Activated CD8-positive, alpha-beta T cell treated with anti-CD3 and anti-CD28 coated beads, Interleukin-2, amount 10 ng/mL, durations not matched to agents 7 days and 5 days (primary cell): ENCODE measurements at regions of chr1 and their contacts with region 1.

Region 1: GRCh38 chr1:205485338-205486228 is 18.9 kb upstream of the CDK18 start:
- DNase-seq: peak; percentile 77
- ATAC-seq: peak; percentile 73
- H3K4me3 Mint-ChIP-seq: no peak overlapping the region
- H3K27ac Mint-ChIP-seq: no peak overlapping the region
- H3K4me1 Mint-ChIP-seq: peaks cover 30% of the 10 kb centered on the region
- H3K27me3 Mint-ChIP-seq: peaks cover 37% of the 10 kb centered on the region

Region 2: DNA sequence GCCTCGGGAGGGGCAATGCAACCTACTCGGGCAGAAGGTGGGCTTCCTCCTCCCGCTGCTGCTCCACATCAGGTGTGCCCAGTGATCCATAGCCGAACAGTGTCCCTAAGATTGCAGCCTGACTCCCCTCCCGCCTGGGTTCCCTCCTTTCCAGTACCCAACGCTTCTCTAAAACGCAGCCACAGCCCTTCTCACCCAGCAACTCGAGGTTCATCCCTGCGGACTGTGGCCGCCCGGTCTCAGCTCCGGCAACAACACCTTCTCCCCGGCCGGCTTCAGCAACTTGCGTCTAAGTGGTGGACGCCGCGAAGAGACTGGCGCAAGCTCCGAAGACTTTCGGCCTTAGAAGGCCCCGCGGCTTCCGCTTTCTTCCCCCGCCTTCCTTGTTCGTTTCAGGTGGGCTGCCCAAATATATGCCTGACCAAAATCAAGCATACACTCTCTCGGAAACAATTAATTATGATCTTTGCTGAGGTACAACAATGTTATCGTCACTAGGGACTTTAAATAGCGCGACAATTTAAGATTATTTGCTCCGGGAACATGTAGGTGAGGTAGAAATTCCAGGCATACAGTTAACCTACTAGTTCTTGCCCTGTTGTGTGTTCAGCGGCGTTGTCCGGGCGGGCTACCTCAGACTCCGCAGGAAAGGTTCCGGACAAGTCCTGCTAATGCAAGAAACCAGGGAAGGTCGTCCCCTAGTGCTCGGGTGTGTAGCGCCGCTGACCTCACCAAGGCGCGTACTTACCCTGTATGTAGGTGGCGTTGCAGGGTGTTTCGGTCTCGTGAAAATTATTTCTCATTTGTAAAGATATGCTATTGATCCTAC is 363.7 kb before region 1 on chr1 and contains the start of gene RBBP5:
- CTCF ChIA-PET with region 1: no interaction called
- POLR2A ChIA-PET with region 1: no interaction called
- DNase-seq: peak; percentile 96
- ATAC-seq: peak; percentile 98
- H3K4me3 Mint-ChIP-seq: peak within 1 kb of the TSS; percentile 96
- H3K27ac Mint-ChIP-seq: peak within 1 kb of the TSS; percentile 99
- H3K4me1 Mint-ChIP-seq: peaks cover 39% of the 10 kb centered on the region
- H3K27me3 Mint-ChIP-seq: no peaks in the 10 kb centered on the region
- total RNA-seq, gene RBBP5: 20.3 to 22.0 TPM

Region 3: GRCh38 chr1:205321164-205321958 is 164.2 kb before region 1 on chr1 and contains the start of gene NUAK2:
- CTCF ChIA-PET with region 1: interaction called, 17 read pairs
- POLR2A ChIA-PET with region 1: no interaction called
- DNase-seq: peak; percentile 69
- ATAC-seq: peak; percentile 79
- H3K4me3 Mint-ChIP-seq: peak within 1 kb of the TSS; percentile 87
- H3K27ac Mint-ChIP-seq: peak within 1 kb of the TSS; percentile 56
- H3K4me1 Mint-ChIP-seq: peaks cover 52% of the 10 kb centered on the region
- H3K27me3 Mint-ChIP-seq: peaks cover 36% of the 10 kb centered on the region
- total RNA-seq, gene NUAK2: 1.6 TPM

Region 4: GRCh38 chr1:205354259-205354904 is 131.2 kb before region 1 on chr1:
- CTCF ChIA-PET with region 1: interaction called, 123 read pairs
- POLR2A ChIA-PET with region 1: no interaction called
- DNase-seq: peak; percentile 79
- ATAC-seq: peak; percentile 51
- H3K4me3 Mint-ChIP-seq: no peak overlapping the region
- H3K27ac Mint-ChIP-seq: no peak overlapping the region
- H3K4me1 Mint-ChIP-seq: no peaks in the 10 kb centered on the region
- H3K27me3 Mint-ChIP-seq: peaks cover 21% of the 10 kb centered on the region

Region 5: DNA sequence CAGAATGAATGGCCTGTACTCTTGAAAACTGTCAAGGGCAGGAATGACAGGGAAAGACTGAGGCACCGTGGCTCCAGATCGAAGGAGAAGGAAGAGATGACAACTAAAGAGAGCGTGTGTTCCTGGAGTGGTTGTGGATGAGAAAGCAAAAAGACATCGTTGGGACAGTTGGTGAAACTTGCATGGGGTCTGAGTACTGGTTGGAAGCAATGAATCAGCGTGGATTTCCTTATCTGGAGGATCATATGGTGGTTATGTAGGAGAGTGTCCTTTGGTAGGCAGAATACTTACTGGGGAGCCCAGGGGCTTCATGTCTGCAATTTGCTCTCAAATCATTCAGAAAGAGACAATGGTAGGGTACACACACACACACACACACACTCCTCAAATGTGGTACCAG is 77.6 kb before region 1 on chr1:
- CTCF ChIA-PET with region 1: interaction called, 14 read pairs
- POLR2A ChIA-PET with region 1: no interaction called
- DNase-seq: no peak
- ATAC-seq: no peak
- H3K4me3 Mint-ChIP-seq: no peak overlapping the region
- H3K27ac Mint-ChIP-seq: no peak overlapping the region
- H3K4me1 Mint-ChIP-seq: peaks cover 4% of the 10 kb centered on the region
- H3K27me3 Mint-ChIP-seq: peaks cover 20% of the 10 kb centered on the region

Region 6: GRCh38 chr1:205430696-205431305 is 54.8 kb before region 1 on chr1:
- CTCF ChIA-PET with region 1: interaction called, 53 read pairs
- POLR2A ChIA-PET with region 1: no interaction called
- DNase-seq: peak; percentile 64
- ATAC-seq: peak; percentile 75
- H3K4me3 Mint-ChIP-seq: peak overlapping the region; percentile 74
- H3K27ac Mint-ChIP-seq: peak overlapping the region; percentile 32
- H3K4me1 Mint-ChIP-seq: peaks cover 11% of the 10 kb centered on the region
- H3K27me3 Mint-ChIP-seq: peaks cover 25% of the 10 kb centered on the region

Region 7: GRCh38 chr1:205500240-205501233 is 15.0 kb after region 1 on chr1:
- CTCF ChIA-PET with region 1: interaction called, 26 read pairs
- POLR2A ChIA-PET with region 1: no interaction called
- DNase-seq: no peak
- ATAC-seq: no peak
- H3K4me3 Mint-ChIP-seq: no peak overlapping the region
- H3K27ac Mint-ChIP-seq: no peak overlapping the region
- H3K4me1 Mint-ChIP-seq: peaks cover 12% of the 10 kb centered on the region
- H3K27me3 Mint-ChIP-seq: peaks cover 9% of the 10 kb centered on the region